GM10248 (cell line): ENCODE measurements at regions of chr12 and their contacts with region 1.

Region 1: GRCh38 chr12:26017484-26018206 is 59.2 kb downstream of the RASSF8 start:
- DNase-seq: peak; percentile 33
- CTCF ChIP-seq: peak; percentile 49

Region 2: DNA sequence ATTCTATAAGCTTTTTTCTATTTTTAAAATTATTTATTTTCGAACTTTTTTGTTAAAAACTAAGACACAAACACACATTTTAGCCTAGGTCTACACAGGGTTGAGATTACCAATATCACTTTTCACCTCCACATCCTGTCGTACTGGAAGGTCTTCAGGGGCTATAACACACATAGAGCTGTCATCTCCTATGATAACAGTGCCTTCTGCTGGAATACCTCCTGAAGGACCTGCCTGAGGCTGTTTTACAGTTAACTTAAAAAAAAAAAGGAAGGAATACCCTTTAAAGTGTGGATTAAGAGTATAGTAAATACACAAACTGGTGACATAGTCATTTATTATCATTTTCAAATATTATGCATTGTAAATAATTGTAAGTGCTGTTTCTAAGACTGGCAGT is 16.1 kb before region 1 on chr12:
- CTCF ChIA-PET with region 1: no interaction called
- POLR2A ChIA-PET with region 1: no interaction called
- DNase-seq: no peak
- CTCF ChIP-seq: no peak

Region 3: GRCh38 chr12:26037615-26038220 is 20.1 kb after region 1 on chr12:
- CTCF ChIA-PET with region 1: interaction called, 12 read pairs
- POLR2A ChIA-PET with region 1: no interaction called
- DNase-seq: no peak
- CTCF ChIP-seq: no peak